Activated CD8-positive, alpha-beta memory T cell treated with anti-CD3 and anti-CD28 coated beads, Interleukin-2, amount 10 ng/mL, durations not matched to agents 7 days and 5 days (primary cell): ENCODE measurements at regions of chr7 and their contacts with region 1.

Region 1: DNA sequence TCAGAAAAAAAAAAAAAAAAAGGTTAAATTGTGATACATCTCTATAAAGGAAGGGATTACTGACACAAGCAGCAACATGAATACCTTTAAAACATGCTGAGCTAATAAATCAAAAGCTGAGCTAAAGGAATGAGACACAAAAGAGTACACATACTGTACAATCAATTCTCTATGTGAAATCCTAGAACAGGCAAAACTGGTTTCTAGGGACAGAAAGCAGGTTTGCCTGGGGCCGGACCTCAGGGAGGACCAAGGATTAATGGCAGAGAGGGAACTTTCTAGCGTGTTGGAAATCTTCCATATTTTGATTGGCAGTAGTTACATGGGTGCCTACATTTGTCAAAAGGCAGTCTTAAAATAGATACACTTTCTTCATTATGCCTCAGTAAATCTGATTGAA is 52.5 kb downstream of the KLRG2 start:
- DNase-seq: no peak
- ATAC-seq: no peak
- H3K4me3 Mint-ChIP-seq: no peak overlapping the region
- H3K27ac Mint-ChIP-seq: no peak overlapping the region
- H3K4me1 Mint-ChIP-seq: peaks cover 5% of the 10 kb centered on the region
- H3K27me3 Mint-ChIP-seq: no peaks in the 10 kb centered on the region

Region 2: DNA sequence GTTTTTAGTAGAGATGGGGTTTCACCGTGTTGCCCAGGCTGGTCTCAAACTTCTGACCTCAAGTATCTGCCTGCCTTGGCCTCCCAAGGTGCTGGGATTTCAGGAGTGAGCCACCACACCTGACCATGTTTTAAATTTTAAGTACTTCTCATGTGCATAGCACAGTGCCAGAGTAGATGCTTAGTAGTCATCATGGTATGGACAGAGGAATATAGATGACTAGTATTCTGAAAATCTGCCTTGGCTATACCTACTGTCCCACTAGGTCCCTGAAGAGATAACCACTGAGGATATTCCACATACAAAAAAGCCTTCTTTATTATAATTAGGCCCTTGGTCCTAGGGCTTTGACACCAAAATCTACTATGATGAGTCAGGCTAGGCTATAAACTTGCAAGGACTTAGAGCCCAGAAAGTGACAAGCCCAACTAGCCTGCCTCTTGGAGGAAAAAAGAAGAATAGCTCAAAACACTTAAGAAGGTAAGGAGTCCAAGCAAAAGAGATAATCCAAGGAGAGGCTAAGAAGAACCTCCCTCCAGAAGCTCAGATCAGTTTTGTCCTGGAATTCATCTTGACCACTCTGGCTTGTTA is 37.3 kb before region 1 on chr7:
- CTCF ChIA-PET with region 1: interaction called, 10 read pairs
- DNase-seq: no peak
- ATAC-seq: peak; percentile 32
- H3K4me3 Mint-ChIP-seq: no peak overlapping the region
- H3K27ac Mint-ChIP-seq: peak overlapping the region; percentile 70
- H3K4me1 Mint-ChIP-seq: peaks cover 28% of the 10 kb centered on the region
- H3K27me3 Mint-ChIP-seq: no peaks in the 10 kb centered on the region

Region 3: GRCh38 chr7:139416405-139416804 is 14.6 kb before region 1 on chr7:
- CTCF ChIA-PET with region 1: interaction called, 13 read pairs
- DNase-seq: no peak
- ATAC-seq: no peak
- H3K4me3 Mint-ChIP-seq: no peak overlapping the region
- H3K27ac Mint-ChIP-seq: no peak overlapping the region
- H3K4me1 Mint-ChIP-seq: no peaks in the 10 kb centered on the region
- H3K27me3 Mint-ChIP-seq: no peaks in the 10 kb centered on the region

Region 4: DNA sequence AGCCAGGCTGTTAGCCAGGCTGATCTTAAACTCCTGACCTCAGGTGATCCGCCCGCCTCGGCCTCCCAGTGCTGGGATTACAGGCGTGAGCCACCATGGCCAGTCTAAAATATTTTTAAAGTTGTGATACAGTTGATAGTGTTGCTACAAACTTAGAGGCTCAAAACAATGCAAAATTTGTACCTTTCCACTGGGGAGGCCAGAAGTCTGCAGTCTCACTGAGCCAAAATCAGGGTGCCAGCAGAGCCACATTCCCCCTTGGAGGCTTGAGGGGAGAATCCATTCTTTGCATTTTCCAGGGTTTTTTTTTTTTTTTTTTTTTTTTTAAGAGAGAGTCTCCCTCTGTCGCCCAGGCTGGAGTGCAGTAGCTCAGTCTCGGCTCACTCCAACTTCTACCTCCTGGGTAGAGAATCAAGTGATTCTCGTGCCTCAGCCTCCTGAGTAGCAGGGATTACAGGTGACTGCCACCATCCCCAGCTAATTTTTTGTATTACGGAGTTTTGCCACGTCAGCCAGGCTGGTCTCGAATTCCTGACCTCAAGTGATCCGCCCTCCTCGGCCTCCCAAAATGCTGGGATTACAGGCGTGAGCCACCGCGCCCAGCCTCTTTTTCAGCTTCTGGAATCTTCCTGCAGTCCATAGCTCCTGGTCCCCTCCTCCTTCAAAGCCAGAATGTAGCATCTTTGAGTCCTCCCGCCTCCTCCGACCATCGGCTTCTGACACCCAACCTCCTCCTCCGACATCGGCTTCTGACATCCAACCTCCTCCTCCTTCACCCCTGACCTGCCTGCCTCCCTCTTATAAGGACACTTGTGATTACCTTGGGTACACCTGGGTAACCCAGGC is 15.2 kb after region 1 on chr7:
- CTCF ChIA-PET with region 1: interaction called, 21 read pairs
- DNase-seq: no peak
- ATAC-seq: no peak
- H3K4me3 Mint-ChIP-seq: no peak overlapping the region
- H3K27ac Mint-ChIP-seq: no peak overlapping the region
- H3K4me1 Mint-ChIP-seq: no peaks in the 10 kb centered on the region
- H3K27me3 Mint-ChIP-seq: no peaks in the 10 kb centered on the region

Region 5: DNA sequence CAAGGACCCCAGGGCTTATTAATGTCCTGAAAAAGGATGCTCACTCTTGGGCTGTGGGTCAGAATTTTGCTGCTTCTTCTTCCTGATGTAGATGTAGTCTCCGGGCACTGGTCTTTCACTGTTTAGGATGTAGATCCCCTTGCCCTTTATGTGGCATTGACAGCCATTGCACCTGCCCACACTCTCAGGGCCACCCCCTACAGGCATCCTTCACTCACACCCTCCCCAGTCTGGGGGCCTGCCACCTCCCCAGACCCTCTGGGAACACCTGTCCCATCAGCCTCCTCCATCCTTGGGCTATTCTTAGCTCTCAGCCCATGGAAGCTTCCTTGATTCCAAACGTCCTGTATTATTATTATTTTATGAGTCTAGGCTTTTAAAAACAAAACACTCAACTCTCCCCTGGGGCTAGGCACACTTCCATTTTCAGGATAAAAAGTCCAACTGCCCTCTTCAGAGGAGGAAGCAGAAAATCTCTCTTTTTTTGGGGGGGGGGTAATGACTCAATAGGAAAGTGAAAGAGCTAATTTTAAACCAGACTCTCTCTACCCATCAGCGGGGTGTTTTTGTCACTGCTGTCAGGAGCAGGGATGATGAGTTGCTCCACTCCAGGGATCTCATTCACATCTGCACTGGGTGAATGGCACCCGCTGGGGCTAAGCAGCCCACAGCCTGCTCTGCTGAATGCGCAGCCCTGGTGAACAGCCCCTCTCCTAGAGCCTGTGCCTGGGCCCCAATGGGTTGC is 64.0 kb after region 1 on chr7:
- CTCF ChIA-PET with region 1: interaction called, 14 read pairs
- DNase-seq: peak; percentile 70
- ATAC-seq: peak; percentile 85
- H3K4me3 Mint-ChIP-seq: no peak overlapping the region
- H3K27ac Mint-ChIP-seq: peak overlapping the region; percentile 64
- H3K4me1 Mint-ChIP-seq: peaks cover 28% of the 10 kb centered on the region
- H3K27me3 Mint-ChIP-seq: peaks cover 16% of the 10 kb centered on the region

Region 6: DNA sequence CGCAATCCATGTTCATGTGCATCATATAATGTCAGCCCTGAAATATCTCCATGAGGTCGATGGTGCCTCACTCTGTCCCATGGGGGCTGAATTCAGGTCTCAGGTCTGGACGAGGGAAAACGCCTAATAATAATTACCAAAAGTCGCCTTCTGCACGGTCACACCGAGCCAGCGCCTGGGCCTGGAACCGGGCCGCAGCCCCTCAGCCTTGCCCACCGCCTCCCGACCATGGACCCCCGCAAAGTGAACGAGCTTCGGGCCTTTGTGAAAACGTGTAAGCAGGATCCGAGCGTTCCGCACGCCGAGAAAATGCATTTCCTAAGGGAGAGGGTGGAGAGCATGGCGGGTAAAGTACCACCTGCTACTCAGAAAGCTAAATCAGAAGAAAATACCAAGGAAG is 71.2 kb after region 1 on chr7:
- CTCF ChIA-PET with region 1: interaction called, 14 read pairs
- DNase-seq: no peak
- ATAC-seq: no peak
- H3K4me3 Mint-ChIP-seq: no peak overlapping the region
- H3K27ac Mint-ChIP-seq: no peak overlapping the region
- H3K4me1 Mint-ChIP-seq: peaks cover 6% of the 10 kb centered on the region
- H3K27me3 Mint-ChIP-seq: peaks cover 12% of the 10 kb centered on the region